ENCODE measurements at regions of chr12 and their contacts with region 1.

Region 1: GRCh38 chr12:56987551-56988053 is 18.7 kb downstream of the ZBTB39 start:
- DNase-seq: peak; percentile 88

Region 2: DNA sequence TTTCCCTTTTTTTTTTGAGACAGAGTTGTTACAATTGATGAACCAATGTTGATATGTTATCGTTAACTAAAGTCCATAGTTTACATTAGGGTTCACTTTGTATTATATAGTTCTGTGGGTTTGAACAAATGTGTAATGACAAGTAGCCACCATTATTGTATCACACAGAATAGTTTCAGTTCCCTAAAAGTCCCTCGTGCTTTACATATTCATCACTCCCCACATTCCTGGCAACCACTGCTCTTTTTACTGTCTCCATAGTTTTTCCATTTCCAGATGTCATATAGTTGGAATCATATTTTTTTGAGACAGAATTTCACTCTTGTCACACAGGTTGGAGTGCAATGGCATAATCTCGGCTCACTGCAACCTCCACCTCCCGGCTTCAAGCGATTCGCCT is 212.0 kb before region 1 on chr12:
- intact Hi-C with region 1: no loop called
- DNase-seq: no peak

Region 3: DNA sequence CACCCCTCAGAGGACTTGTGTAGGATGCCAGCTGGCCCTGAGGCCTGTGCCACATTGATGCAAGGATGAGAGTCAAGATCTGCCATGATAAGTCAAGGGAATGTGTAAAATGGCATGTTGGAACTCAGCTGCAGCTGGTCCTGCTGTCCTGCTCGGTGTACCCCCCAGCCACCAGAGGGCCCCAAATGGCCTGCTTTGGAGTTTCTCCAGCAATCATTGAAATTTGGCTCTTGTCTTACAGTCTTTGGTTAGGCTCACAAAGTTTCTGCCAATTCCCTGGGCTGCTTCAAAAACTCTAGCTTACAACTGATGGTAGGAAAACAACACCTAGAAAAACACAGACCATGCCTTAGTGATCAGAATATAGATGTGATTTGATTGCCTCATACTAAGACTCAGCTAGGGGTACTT is 147.7 kb before region 1 on chr12:
- intact Hi-C with region 1: loop called (anchors 5 kb)
- DNase-seq: no peak

Region 4: DNA sequence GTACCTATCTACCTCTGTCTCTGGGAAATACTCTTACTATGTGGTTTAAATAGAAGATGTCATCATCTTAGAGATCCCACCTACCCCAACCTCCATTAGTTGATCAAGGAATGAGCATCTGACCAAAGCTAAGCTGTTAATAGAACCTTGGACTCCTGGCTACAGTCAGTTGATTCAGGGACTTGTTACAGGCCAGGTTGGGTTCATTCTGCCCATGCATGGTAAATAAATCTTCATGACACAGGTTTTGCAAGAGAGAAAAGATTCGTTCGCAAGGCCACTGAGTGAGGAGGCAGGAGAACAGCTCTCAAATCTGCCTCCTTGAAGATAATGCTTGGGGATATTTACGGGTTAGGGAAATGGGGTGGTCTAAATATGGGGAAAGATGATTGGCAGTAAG is 72.9 kb before region 1 on chr12:
- intact Hi-C with region 1: no loop called
- DNase-seq: no peak

Region 5: DNA sequence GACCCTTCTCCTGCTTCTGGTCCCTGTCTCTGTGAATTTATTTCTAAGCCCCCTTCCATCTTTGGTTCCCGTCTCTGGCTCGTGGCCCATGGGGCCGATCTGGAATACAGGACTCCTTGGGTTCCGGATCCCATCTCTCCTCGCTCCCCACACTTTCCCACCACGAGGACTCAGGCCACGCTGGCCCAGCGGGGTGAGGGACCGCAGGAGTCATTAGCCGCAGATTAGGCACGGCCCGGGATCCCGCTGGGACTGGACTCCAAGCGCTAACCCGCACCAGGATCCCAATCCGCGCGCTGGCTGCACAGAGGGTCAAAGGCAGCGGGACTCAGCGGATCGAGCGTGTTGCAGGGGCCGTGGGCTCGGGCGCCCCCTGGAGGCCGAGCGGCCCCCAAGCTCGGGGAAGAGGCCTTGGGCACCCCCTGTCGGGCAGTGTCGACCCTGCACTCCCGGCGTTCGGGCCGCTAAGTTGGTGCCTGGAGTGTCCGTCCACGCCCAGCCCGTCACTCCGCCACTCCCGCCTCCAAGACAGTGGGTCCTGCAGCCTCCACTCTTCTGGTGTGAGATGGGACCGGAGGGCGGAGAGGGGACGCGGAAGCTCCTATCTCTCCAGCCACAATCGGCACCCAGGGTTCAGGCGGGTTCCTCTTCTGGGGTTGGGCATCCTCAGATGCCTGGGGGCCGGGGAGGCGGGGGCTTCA is 251.4 kb after region 1 on chr12:
- intact Hi-C with region 1: no loop called
- DNase-seq: peak; percentile 95